CD14-positive monocyte (primary cell): ENCODE measurements at regions of chr11 and their contacts with region 1.

Region 1: DNA sequence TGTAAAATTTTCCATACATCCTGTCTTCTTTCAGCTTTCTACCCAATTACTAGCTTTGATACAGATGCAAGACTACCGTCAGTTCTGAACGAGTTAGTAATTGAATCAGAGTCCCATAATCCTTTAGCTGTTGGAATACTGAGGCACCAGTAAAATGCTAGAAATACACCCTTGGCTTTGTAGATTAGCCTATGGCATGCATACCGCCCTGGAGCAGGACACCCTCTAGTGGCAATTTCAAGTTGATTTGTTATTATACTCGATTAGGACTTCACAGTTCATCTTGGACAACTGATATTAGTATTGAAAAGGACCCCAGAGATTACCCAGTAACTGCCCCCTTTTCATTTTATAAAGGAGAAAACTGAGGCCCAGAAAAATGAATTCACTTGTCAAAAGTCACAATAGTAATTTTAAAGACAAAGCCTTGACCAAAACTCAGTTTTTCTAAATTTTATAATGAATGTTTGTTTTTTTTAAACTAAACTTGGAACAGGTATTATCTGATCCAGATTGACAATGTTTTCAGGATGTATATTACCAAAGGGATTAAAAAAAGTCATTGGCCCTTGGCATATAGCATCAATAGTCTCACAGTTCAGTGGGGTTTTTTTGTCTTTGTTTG is 72.6 kb downstream of the HIPK3 start:
- DNase-seq: peak; percentile 39 to 53 (median 49)
- H3K4me3 ChIP-seq: no peak overlapping the region
- H3K4me3 Mint-ChIP-seq: no peak overlapping the region
- H3K27ac ChIP-seq: peak overlapping the region in 1 of 2 donors; percentile 37
- H3K27ac Mint-ChIP-seq: peak overlapping the region in 2 of 7 donors; percentile 23 to 81
- H3K4me1 ChIP-seq: peaks cover 9 to 17% of the 10 kb centered on the region in 2 donors
- H3K4me1 Mint-ChIP-seq: peaks cover 20% of the 10 kb centered on the region
- H3K27me3 ChIP-seq: no peaks in the 10 kb centered on the region
- H3K27me3 Mint-ChIP-seq: no peaks in the 10 kb centered on the region
- CTCF ChIP-seq: peak; percentile 71

Region 2: DNA sequence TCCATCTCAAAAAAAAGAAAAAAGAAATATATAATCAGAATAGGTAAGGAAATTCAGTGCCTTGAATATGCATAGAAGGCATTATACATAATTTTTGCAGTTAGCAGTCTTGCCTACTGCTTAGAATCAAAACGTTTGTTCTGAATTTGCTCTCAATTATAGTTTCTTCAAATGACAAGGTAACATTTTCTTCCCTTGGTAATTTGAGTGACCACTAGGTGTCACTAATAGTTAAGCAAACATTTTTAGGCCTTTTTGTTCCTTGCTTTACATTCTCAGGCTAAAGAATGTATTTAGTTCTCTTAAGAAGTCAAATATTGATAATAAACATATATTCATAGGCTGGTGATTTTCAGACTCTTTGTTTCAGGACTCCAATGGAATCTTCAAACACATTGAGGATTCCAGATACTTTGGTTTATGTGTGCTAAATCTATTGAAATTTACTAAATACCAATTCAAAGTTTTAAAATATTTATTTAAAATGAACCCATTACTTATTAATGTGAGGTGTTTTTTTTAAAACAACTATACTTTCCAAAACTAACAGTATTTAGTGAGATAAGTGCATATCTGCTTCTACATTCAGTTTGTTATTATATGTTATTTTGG is 369.2 kb before region 1 on chr11:
- intact Hi-C with region 1: loop called in 1 of 2 experiments (anchors 10 kb)
- DNase-seq: peak; percentile 20 to 58 (median 40)
- H3K4me3 ChIP-seq: no peak overlapping the region
- H3K4me3 Mint-ChIP-seq: no peak overlapping the region
- H3K27ac ChIP-seq: no peak overlapping the region
- H3K27ac Mint-ChIP-seq: no peak overlapping the region
- H3K4me1 ChIP-seq: no peaks in the 10 kb centered on the region
- H3K4me1 Mint-ChIP-seq: no peaks in the 10 kb centered on the region
- H3K27me3 ChIP-seq: no peaks in the 10 kb centered on the region
- H3K27me3 Mint-ChIP-seq: no peaks in the 10 kb centered on the region
- CTCF ChIP-seq: peak; percentile 83

Region 3: DNA sequence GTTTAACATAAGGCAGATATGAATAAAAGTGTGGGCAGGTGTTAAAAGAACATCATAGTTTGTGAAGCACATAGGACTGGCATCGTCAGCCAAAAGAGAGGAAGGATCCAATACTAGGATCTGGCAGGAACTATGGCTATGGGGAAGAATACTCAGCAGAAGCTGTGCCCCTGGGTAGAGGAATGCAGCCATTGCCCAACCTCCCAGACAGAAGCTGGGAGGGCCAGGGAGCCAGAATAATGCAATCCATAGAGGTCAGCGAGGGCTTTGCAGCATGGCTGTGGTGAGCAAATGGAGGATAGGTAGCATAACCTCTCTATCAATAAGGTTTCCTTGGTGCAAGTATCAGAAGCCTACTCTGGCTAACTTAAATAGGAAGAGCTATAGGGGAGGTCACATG is 156.8 kb before region 1 on chr11:
- intact Hi-C with region 1: loop called in 1 of 2 experiments (anchors 5 kb)
- DNase-seq: peak in 2 of 3 donors; percentile 43 to 46
- H3K4me3 ChIP-seq: no peak overlapping the region
- H3K4me3 Mint-ChIP-seq: peak overlapping the region in 1 of 2 donors; percentile 6
- H3K27ac ChIP-seq: peak overlapping the region in 1 of 2 donors; percentile 54
- H3K27ac Mint-ChIP-seq: peak overlapping the region in 6 of 7 donors; percentile 19 to 79 (median 69)
- H3K4me1 ChIP-seq: peaks cover 7 to 10% of the 10 kb centered on the region in 2 donors
- H3K4me1 Mint-ChIP-seq: peaks cover 18% of the 10 kb centered on the region
- H3K27me3 ChIP-seq: no peaks in the 10 kb centered on the region
- H3K27me3 Mint-ChIP-seq: peaks cover 0 to 4% (median 0%) of the 10 kb centered on the region in 3 donors
- CTCF ChIP-seq: no peak

Region 4: GRCh38 chr11:33273656-33274055 is 56.2 kb before region 1 on chr11:
- intact Hi-C with region 1: loop called in 1 of 2 experiments (anchors 10 kb)
- DNase-seq: no peak
- H3K4me3 ChIP-seq: no peak overlapping the region
- H3K4me3 Mint-ChIP-seq: no peak overlapping the region
- H3K27ac ChIP-seq: peak overlapping the region in 1 of 2 donors; percentile 54
- H3K27ac Mint-ChIP-seq: peak overlapping the region in 1 of 7 donors; percentile 42
- H3K4me1 ChIP-seq: peaks cover 15 to 36% of the 10 kb centered on the region in 2 donors
- H3K4me1 Mint-ChIP-seq: peaks cover 47% of the 10 kb centered on the region
- H3K27me3 ChIP-seq: no peaks in the 10 kb centered on the region
- H3K27me3 Mint-ChIP-seq: no peaks in the 10 kb centered on the region
- CTCF ChIP-seq: no peak

Region 5: GRCh38 chr11:33291004-33291777 is 38.6 kb before region 1 on chr11:
- intact Hi-C with region 1: no loop called
- DNase-seq: no peak
- H3K4me3 ChIP-seq: no peak overlapping the region
- H3K4me3 Mint-ChIP-seq: no peak overlapping the region
- H3K27ac ChIP-seq: no peak overlapping the region
- H3K27ac Mint-ChIP-seq: peak overlapping the region in 2 of 7 donors; percentile 11 to 40
- H3K4me1 ChIP-seq: no peaks in the 10 kb centered on the region
- H3K4me1 Mint-ChIP-seq: peaks cover 6% of the 10 kb centered on the region
- H3K27me3 ChIP-seq: no peaks in the 10 kb centered on the region
- H3K27me3 Mint-ChIP-seq: no peaks in the 10 kb centered on the region
- CTCF ChIP-seq: no peak